ENCODE measurements at regions of chr11 and their contacts with region 1.

Region 1: GRCh38 chr11:95231127-95231880 is at the start of gene SESN3:
- DNase-seq: peak; percentile 99
- H3K4me3 Mint-ChIP-seq: no peak within 1 kb of the TSS
- H3K27ac Mint-ChIP-seq: peak within 1 kb of the TSS; percentile 85
- H3K4me1 Mint-ChIP-seq: peaks cover 53% of the 10 kb centered on the region
- H3K27me3 Mint-ChIP-seq: no peaks in the 10 kb centered on the region
- total RNA-seq, gene SESN3: 13.9 to 15.5 TPM

Region 2: GRCh38 chr11:94910779-94911178 is 320.5 kb before region 1 on chr11:
- CTCF ChIA-PET with region 1: no interaction called
- POLR2A ChIA-PET with region 1: no interaction called
- intact Hi-C with region 1: no loop called
- DNase-seq: no peak
- H3K4me3 Mint-ChIP-seq: no peak overlapping the region
- H3K27ac Mint-ChIP-seq: no peak overlapping the region
- H3K4me1 Mint-ChIP-seq: no peaks in the 10 kb centered on the region
- H3K27me3 Mint-ChIP-seq: no peaks in the 10 kb centered on the region

Region 3: GRCh38 chr11:95084509-95084908 is 146.8 kb before region 1 on chr11:
- CTCF ChIA-PET with region 1: no interaction called
- POLR2A ChIA-PET with region 1: interaction called, 3 read pairs
- intact Hi-C with region 1: loop called (anchors 2 kb)
- DNase-seq: peak; percentile 79
- H3K4me3 Mint-ChIP-seq: no peak overlapping the region
- H3K27ac Mint-ChIP-seq: peak overlapping the region; percentile 77
- H3K4me1 Mint-ChIP-seq: peaks cover 45% of the 10 kb centered on the region
- H3K27me3 Mint-ChIP-seq: no peaks in the 10 kb centered on the region

Region 4: GRCh38 chr11:95254131-95254704 is 22.9 kb after region 1 on chr11:
- CTCF ChIA-PET with region 1: interaction called, 11 read pairs
- POLR2A ChIA-PET with region 1: interaction called, 17 read pairs
- intact Hi-C with region 1: loop called (anchors 1 kb)
- DNase-seq: peak; percentile 91
- H3K4me3 Mint-ChIP-seq: peak overlapping the region; percentile 81
- H3K27ac Mint-ChIP-seq: peak overlapping the region; percentile 93
- H3K4me1 Mint-ChIP-seq: peaks cover 42% of the 10 kb centered on the region
- H3K27me3 Mint-ChIP-seq: no peaks in the 10 kb centered on the region

Region 5: DNA sequence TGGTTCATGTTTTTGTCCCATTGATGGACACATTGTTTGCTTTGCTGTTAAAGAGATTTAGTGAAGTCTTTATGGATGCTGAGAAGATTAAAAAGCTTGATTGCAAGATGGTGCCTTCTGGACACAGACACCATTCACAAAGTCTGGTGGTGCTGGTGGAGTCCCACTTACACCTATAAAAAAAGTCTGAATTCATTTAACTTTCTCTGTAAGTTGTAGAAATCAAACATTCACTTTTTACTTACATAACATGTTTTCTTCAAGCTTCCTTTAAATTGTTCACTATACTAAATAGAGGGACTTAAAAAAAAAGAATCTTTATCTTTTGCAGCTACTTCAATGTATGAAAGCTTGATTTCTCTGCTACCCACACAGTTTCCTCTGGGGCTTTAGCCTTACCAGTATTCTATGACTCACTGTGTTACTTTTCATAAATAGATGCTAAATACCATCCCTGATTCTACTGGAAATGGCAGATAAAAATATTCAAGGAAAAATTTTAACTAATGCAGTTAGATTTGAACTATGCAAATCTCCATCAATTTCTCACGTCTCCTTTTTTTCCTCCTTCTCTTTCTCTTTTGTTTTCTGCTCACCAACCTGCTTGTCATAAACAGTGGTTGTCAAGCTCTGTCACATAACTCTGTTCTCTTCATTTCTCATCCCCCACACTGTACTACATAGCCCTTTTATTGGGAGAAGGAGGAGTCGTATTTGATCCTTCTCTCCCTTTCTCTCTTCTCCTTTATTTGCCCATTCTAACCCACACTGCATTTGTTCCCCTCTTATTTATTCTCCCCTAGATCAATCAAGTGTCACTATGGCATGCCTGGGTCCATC is 468.5 kb after region 1 on chr11:
- CTCF ChIA-PET with region 1: interaction called, 59 read pairs
- POLR2A ChIA-PET with region 1: interaction called, 12 read pairs
- intact Hi-C with region 1: loop called (anchors 1 kb)
- DNase-seq: no peak
- H3K4me3 Mint-ChIP-seq: peak overlapping the region; percentile 65
- H3K27ac Mint-ChIP-seq: peak overlapping the region; percentile 85
- H3K4me1 Mint-ChIP-seq: peaks cover 56% of the 10 kb centered on the region
- H3K27me3 Mint-ChIP-seq: no peaks in the 10 kb centered on the region

Region 6: DNA sequence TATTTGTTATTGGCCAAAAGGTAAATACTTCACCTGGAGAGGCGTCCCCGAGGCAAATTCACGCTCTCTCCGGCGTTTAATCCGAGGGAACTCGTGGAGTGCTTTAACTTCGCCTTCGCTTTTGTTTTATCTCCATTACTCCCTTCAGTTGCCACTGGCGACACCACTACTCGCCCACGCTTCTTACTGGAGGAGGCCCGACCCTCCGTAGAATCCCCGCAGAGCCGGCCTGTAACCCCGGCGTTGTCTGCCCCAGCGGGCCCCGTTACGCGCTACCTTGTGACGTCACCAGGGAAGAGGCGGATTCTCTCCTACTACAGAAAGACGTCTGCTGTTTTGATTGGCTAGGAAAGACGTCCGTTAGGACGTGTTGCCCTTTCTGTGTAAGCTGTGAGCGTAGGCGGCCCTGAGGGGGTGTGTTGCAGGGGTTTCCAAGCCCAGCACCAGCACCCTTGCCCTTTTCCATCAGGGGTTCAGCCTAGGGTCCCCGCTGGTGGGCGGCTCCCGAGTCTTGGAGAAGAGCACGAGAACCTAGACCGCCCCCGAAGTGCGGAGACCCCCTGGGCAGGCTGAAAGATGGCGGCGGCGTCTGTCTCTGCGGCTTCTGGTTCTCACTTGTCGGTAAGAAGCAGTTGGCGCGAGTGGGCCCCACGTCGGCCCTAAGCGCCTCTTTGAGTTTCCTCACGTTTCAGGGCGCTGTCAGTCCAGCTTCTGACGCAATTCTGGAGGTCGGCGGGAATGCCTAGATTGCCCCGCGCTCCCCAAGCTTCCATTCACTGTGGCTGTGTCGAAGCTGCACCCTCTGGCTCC is 559.0 kb after region 1 on chr11 and contains the start of gene CEP57:
- CTCF ChIA-PET with region 1: interaction called, 4 read pairs
- POLR2A ChIA-PET with region 1: interaction called, 12 read pairs
- intact Hi-C with region 1: loop called (anchors 1 kb)
- DNase-seq: peak; percentile 97
- H3K4me3 Mint-ChIP-seq: peak within 1 kb of the TSS; percentile 95
- H3K27ac Mint-ChIP-seq: peak within 1 kb of the TSS; percentile 100
- H3K4me1 Mint-ChIP-seq: peaks cover 55% of the 10 kb centered on the region
- H3K27me3 Mint-ChIP-seq: no peaks in the 10 kb centered on the region
- total RNA-seq, gene CEP57: 115 to 117 TPM

Measured in activated CD4-positive, alpha-beta memory T cell treated with anti-CD3 and anti-CD28 coated beads for 36 hours (primary cell).